ENCODE measurements at regions of chr4 and their contacts with region 1.

Region 1: GRCh38 chr4:4386736-4387392 is at the start of gene NSG1:
- DNase-seq: peak; percentile 55
- H3K4me3 Mint-ChIP-seq: peak within 1 kb of the TSS; percentile 78
- H3K27ac Mint-ChIP-seq: no peak within 1 kb of the TSS
- H3K4me1 Mint-ChIP-seq: peaks cover 13% of the 10 kb centered on the region
- H3K27me3 Mint-ChIP-seq: peaks cover 17% of the 10 kb centered on the region
- total RNA-seq, gene NSG1: 9.1 to 11.4 TPM

Region 2: DNA sequence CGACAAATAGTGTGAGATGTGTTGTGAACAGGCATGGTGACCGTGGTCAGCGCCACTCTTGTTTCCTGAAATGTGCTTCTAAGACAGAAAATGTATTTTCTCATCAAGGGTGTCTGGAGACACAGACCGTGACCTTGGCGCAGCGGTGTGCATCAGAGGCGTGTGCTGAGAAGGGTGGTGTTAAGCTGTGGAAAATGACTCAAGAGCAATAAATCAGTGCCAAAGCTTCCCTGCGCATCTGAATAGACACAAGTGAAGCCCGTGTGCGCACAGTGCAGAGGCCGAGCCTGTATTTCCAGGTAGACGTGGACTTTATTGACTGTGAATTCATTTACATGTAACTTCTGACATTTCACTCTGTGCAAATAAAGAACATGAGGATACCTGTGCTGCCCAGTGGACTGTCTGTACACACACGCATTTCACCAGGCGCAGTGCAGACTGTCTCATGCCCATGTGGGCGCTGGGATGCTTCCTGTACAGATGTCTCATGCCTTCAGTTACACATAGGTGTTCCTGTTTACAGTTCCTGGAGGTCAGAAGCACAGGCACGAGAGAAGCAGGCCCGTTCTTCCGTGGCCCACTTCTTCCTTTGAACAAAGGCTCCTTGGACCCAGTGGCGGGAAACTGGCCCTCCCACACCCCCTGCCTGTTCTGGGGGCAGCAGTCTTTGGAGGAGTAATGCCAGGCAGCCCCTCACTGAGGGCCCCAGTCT is 32.0 kb after region 1 on chr4:
- CTCF ChIA-PET with region 1: no interaction called
- POLR2A ChIA-PET with region 1: no interaction called
- intact Hi-C with region 1: loop called (anchors 2 kb)
- DNase-seq: peak; percentile 55
- H3K4me3 Mint-ChIP-seq: no peak overlapping the region
- H3K27ac Mint-ChIP-seq: peak overlapping the region; percentile 64
- H3K4me1 Mint-ChIP-seq: peaks cover 28% of the 10 kb centered on the region
- H3K27me3 Mint-ChIP-seq: no peaks in the 10 kb centered on the region

Region 3: DNA sequence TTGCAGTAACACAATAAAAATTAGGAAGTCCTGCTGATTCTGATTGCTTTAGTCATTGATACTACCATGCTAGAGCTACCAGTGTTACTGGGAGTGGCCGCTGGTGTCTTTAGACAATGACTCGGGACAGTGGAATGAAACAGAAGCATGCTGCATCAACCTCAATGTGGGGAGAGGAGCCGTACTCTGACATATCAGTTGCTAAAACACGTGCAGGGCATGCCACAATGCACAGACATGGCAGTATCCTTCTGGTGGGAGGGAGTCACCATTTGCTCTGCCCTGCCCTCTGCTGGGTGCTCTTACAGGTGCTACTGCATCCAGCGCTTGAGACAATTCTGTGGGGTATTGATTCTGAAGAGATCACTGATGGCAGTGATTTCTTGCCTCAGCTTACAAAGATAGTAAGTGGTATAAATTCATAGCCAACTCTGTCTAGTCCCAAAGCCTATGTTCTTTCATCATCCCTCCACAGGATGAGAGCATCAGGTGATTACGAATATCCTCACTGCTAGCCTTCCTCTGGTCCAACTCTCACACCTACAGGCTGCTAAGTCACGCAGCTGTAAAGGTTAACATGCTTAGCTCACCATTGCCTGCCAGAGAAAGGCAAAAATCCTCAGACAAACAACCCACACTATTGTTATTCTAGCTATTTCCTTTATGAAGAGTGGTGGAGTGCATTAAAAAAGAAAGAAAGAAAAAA is 43.8 kb after region 1 on chr4:
- CTCF ChIA-PET with region 1: interaction called, 5 read pairs
- POLR2A ChIA-PET with region 1: no interaction called
- intact Hi-C with region 1: loop called (anchors 2 kb)
- DNase-seq: peak; percentile 73
- H3K4me3 Mint-ChIP-seq: no peak overlapping the region
- H3K27ac Mint-ChIP-seq: no peak overlapping the region
- H3K4me1 Mint-ChIP-seq: peaks cover 13% of the 10 kb centered on the region
- H3K27me3 Mint-ChIP-seq: no peaks in the 10 kb centered on the region

Measured in activated CD4-positive, alpha-beta memory T cell treated with anti-CD3 and anti-CD28 coated beads for 36 hours (primary cell).